Dendritic cell treated with granulocyte-macrophage colony-stimulating factor and Interleukin-4, amounts not matched to agents 40 ng/mL and 50 ng/mL, for 4 days (primary cell): ENCODE measurements at regions of chr17 and their contacts with region 1.

Region 1: DNA sequence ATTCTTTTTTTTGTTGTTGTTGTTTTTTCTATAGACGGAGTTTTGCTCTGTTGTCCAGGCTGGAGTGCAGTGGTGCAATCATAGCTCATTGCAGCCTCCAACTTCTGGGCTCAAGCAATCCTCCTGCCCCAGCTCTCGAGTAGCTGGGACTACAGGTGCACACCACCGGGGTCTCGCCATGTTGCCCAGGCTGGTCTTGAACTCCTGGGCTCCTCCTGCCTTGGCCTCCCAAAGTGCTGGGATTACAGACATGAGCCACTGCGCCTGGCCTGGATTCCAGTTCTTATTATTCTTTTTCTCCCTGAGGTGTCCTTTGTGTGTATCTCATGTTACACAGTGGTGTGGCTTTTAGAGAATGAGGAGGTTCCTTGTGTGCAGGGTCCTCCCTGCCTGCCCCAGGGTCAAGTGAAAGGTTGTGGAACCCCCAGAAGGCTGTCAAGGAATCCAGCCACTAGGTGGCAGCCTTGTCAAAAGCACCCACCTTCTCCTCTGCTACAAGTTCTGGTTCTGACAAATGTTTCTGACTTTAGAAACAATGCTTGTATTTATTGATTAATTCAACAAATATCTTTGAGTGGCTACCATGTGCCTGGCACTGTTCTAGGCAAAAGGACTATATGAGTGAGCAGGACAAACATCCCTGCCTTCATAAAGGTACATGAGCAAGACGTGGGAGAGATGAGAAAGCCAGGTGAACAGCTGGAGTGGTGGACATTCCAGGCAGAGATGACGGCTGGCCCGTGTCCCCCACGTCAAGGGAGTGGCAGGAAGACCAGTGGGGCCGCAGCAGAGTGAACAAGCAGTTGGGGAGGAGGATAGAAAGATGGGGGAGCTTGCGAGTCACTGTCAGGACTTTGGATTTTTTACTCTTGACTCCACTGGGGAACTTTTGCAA is 112.4 kb downstream of the SPECC1 start:
- H3K4me3 Mint-ChIP-seq: no peak overlapping the region
- H3K27ac Mint-ChIP-seq: peak overlapping the region; percentile 53
- H3K4me1 Mint-ChIP-seq: peaks cover 19% of the 10 kb centered on the region
- H3K27me3 Mint-ChIP-seq: no peaks in the 10 kb centered on the region

Region 2: DNA sequence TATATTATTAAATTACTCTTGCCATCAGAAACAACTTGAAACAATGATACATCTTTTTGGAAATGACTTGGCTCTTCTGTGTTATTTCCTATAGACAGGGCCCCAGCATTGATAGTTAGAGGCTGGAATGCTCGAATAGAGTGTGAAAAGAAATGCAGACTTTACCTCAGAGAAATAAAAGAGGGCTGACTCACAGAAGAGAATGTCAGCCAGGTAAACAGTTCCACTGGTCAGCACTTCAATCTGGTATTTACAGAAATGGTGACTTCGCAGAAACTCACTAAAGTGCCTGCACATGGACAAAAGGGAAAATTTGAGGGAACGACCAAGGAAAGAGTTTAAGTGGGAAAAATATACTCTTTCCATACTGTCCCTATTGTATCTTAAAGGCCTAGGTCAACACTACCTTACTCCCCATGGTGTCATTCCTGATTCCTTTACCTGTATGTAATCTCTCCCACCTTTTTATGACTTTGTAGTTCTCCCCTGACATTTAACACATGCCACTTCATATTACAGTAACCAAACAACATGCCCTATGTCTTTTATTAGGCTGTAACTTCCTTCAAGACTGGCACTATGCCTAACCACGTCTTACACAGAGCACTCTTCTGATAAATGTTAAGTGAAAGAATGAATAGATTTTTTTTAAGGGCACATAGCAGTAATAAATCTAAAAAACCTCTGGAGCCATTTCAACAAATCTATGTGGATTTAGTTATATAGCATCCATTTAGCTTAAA is 180.7 kb before region 1 on chr17:
- intact Hi-C with region 1: no loop called
- H3K4me3 Mint-ChIP-seq: no peak overlapping the region
- H3K27ac Mint-ChIP-seq: no peak overlapping the region
- H3K4me1 Mint-ChIP-seq: peaks cover 12% of the 10 kb centered on the region
- H3K27me3 Mint-ChIP-seq: no peaks in the 10 kb centered on the region

Region 3: DNA sequence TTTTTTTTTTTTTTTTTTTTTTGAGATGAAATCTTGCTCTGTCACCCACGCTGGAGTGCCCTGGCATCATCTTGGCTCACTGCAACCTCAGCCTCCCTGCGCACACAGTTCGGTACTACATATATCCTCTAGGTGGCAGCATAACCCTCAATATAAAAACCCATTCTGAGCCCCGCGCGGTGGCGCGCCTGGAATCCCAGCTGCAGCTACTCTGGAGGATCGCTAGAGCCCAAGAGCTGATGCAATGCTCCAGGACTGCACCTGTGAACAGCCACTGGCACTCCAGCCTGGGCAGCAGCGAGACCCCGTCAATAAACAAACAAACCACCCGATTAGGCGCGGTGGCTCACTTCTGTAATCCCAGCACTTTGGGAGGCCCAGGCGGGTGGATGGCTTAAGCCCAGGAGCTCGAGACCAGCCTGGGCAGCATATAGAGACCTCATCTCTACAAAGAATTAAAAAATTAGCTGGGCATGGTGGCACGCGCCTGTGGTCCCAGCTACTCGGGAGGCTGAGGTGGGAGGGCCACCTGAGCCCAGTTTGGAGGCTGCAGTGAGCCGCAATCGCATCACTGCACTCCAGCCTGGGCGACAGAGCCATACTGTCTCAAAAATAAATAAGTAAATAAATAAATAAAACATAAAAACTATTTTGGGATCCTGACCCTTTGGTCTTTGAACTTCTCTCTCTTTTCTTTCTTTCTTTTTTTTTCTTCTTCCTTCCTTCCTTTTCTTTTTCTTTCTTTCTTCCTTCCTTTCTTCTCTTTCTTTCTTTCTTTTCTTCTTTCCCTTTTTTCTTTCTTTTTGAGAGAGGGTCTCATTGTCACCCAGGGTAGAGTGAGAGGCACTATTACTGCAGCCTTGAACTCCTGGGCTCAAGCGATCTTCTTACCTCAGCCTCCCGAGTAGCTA is 128.5 kb before region 1 on chr17:
- intact Hi-C with region 1: loop called (anchors 1 kb)
- H3K4me3 Mint-ChIP-seq: no peak overlapping the region
- H3K27ac Mint-ChIP-seq: no peak overlapping the region
- H3K4me1 Mint-ChIP-seq: peaks cover 20% of the 10 kb centered on the region
- H3K27me3 Mint-ChIP-seq: peaks cover 13% of the 10 kb centered on the region

Region 4: DNA sequence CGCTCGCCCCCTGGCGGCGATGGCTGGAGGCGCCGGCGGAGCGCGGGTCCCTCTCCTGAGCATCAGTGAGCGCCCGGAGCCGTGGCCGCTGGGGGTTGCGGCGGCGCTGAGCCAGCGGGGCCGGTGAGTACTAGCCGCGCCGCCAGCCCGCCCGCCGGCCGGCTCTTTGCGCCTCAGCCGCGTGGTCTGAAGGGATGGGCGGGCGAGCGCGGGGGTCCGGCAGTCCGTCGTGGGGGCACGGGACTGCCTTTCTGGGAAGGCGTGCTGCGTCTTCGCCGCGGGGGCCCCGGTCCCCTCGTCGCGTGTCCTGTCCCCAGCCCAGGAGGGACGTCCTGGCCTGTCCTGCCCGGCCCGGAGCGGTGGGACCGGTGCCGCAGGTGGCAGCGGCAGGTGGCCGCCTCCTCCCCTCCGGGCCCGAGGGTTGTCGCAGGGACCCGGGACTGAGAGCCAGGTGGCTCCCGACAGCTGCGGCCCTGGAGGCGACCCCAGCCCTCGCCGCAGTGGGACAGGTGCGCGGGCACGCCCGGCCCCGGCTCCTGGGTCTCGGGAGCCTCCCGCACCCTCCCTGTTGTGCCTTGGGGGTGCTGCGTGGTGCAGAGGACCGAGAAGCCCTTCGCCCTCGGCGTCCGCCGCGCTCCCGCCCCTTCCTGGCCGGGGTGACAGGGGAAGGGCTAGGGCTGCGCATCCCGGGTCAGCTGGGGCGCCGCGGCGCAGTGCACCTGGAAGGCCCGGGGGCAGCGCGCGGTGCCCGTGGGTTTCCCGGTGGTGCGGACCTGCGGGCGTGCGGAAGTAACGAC is 112.1 kb before region 1 on chr17 and contains the start of gene SPECC1:
- intact Hi-C with region 1: loop called (anchors 5 kb)
- H3K4me3 Mint-ChIP-seq: peak within 1 kb of the TSS; percentile 92
- H3K27ac Mint-ChIP-seq: peak within 1 kb of the TSS; percentile 61
- H3K4me1 Mint-ChIP-seq: peaks cover 20% of the 10 kb centered on the region
- H3K27me3 Mint-ChIP-seq: peaks cover 41% of the 10 kb centered on the region

Region 5: DNA sequence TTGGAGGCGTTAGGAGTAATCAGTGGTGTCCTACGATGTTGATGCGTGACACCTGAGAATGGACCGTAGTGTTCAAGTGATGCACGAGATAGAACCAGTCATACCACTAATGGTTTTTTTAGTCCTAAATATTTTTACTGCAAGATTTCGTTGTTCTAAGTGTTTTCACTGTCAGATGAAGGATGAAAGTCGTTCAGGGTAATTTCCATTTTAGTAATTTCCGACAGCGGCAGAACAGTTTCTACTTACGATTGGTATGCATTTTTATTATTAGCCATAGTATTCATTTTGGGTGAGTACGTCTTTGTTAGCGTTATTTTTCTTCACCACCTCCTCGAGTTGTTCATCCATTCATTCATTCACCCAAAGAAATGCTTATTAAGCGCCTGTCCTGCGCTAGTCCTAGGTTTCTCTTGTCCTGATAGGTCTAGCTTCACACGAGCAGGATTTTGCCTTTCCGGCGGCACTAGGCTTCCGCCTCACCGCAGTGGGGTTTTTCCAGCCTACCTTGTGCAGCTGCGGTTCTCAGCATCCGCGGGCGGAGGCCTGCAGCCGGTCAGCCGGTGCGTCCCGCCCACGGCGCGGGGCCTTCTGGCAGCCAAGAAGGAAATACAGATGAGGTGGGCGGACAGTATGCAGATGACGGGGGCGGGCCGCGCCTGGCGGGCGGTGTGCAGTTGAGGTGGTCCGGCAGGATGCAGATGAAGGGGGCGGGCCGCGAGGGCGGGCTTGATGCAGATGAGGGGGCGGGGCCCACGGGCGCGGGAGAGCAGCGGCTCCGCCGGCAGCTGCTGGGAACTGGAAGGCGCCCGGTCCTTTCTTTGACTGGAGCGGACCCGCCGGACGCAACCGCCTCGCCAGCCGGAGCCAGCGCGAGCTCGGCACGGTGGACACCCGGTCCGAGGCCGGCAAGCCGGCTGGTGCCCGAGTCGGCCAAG is 33.9 kb after region 1 on chr17:
- intact Hi-C with region 1: loop called (anchors 5 kb)
- H3K4me3 Mint-ChIP-seq: peak overlapping the region; percentile 70
- H3K27ac Mint-ChIP-seq: peak overlapping the region; percentile 56
- H3K4me1 Mint-ChIP-seq: peaks cover 12% of the 10 kb centered on the region
- H3K27me3 Mint-ChIP-seq: peaks cover 2% of the 10 kb centered on the region

Region 6: GRCh38 chr17:20226814-20227482 is 105.3 kb after region 1 on chr17:
- intact Hi-C with region 1: loop called (anchors 1 kb)
- H3K4me3 Mint-ChIP-seq: no peak overlapping the region
- H3K27ac Mint-ChIP-seq: no peak overlapping the region
- H3K4me1 Mint-ChIP-seq: peaks cover 16% of the 10 kb centered on the region
- H3K27me3 Mint-ChIP-seq: no peaks in the 10 kb centered on the region

Region 7: DNA sequence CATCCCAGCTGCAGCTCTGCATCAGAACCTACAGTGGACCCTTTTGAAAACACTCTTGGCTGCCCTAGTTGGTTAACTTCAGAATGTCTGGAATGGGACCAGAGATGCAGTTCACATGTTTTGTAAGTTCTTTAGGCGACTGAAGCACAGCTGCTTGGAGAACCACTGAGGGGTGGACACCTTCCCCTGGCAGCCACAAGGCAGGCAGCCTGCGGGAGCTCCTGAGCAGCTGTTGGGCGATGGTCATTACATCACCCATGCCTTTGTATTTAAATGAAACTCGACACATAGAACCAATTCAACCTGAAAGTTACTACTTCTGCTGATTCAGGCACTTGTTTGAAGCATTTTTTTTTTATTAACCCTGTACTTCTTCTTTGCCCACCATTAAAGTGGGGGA is 194.2 kb after region 1 on chr17:
- intact Hi-C with region 1: loop called (anchors 2 kb)
- H3K4me3 Mint-ChIP-seq: no peak overlapping the region
- H3K27ac Mint-ChIP-seq: no peak overlapping the region
- H3K4me1 Mint-ChIP-seq: peaks cover 7% of the 10 kb centered on the region
- H3K27me3 Mint-ChIP-seq: peaks cover 8% of the 10 kb centered on the region